H1 (cell line): ENCODE measurements at regions of chr2 and their contacts with region 1.

Region 1: DNA sequence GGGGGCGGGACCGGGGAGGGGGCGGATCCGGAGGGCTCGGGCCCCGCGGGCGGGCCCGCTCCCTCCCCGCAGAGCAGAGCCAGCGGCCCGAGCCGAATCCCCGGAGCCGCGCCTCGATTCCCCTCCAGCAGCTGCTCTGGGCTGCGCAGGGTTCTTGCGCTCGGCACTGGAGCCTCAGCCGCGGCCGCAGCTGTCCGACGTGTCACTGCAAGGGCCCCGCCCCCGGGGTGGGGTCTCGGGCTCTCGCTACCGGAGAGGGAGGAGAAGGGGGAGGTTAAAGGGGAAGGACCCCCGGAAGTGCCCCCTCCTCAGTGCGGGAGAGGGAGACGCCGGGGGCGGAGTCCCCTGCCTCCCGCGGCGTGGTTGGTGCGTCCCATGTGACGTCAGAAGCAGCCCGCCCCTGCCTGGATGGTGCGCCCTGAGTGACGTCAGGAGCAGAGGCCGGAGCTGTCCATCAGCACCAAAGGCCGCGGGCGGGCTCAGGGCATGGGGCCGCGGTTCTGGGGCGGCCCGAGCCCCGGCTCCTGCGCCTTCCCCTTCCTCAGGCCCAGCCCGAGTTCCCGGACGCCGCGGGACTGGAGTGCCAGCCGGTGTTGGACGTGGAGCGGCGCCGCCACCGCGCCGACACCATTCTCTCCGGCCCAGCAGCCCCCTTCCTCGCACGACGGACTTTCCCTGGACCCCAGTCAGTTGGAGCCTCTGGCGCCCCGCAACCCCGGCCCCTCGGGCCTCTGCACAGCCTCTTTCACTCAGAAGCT is at the starts of genes CHPF and TMEM198:
- DNase-seq: peak; percentile 98
- H3K4me3 ChIP-seq: peak within 1 kb of the TSS; percentile 73 to 90 (median 80)
- H3K27ac ChIP-seq: peak within 1 kb of the TSS; percentile 19; the same call in 1 of the 2 replicates
- H3K4me1 ChIP-seq: peaks cover 2 to 13% (median 7%) of the 10 kb centered on the region in 4 experiments; a peak in 6 of 7 replicates
- H3K27me3 ChIP-seq: peaks cover 0 to 4% (median 0%) of the 10 kb centered on the region in 4 experiments; a peak in 2 of 7 replicates
- CTCF ChIP-seq: no peak
- EP300 ChIP-seq: peak in 1 of 2 experiments; percentile 88; a peak in 1 of 3 replicates
- POLR2A ChIP-seq: peak in 1 of 2 experiments; percentile 60; a peak in 2 of 3 replicates
- RAD21 ChIP-seq: no peak; a peak in 1 of 4 replicates
- total RNA-seq, gene CHPF: 62.9 and 68.1 TPM in 2 replicates
- total RNA-seq, gene TMEM198: 10.2 and 11.0 TPM in 2 replicates

Region 2: GRCh38 chr2:219509780-219510511 is 33.8 kb before region 1 on chr2:
- CTCF ChIA-PET with region 1: interaction called, 488 read pairs
- POLR2A ChIA-PET with region 1: no interaction called
- DNase-seq: peak in 1 of 2 experiments; percentile 91
- H3K4me3 ChIP-seq: peak overlapping the region; percentile 27 to 56 (median 50); a peak in 7 of 8 replicates
- H3K27ac ChIP-seq: no peak overlapping the region
- H3K4me1 ChIP-seq: peaks cover 7 to 76% (median 65%) of the 10 kb centered on the region in 4 experiments
- H3K27me3 ChIP-seq: peaks cover 2 to 37% (median 34%) of the 10 kb centered on the region in 4 experiments
- CTCF ChIP-seq: peak in 2 of 3 experiments; percentile 70 to 89; a peak in 3 of 4 replicates
- EP300 ChIP-seq: no peak
- POLR2A ChIP-seq: no peak
- RAD21 ChIP-seq: peak; percentile 38 to 57; a peak in 3 of 4 replicates

Region 3: DNA sequence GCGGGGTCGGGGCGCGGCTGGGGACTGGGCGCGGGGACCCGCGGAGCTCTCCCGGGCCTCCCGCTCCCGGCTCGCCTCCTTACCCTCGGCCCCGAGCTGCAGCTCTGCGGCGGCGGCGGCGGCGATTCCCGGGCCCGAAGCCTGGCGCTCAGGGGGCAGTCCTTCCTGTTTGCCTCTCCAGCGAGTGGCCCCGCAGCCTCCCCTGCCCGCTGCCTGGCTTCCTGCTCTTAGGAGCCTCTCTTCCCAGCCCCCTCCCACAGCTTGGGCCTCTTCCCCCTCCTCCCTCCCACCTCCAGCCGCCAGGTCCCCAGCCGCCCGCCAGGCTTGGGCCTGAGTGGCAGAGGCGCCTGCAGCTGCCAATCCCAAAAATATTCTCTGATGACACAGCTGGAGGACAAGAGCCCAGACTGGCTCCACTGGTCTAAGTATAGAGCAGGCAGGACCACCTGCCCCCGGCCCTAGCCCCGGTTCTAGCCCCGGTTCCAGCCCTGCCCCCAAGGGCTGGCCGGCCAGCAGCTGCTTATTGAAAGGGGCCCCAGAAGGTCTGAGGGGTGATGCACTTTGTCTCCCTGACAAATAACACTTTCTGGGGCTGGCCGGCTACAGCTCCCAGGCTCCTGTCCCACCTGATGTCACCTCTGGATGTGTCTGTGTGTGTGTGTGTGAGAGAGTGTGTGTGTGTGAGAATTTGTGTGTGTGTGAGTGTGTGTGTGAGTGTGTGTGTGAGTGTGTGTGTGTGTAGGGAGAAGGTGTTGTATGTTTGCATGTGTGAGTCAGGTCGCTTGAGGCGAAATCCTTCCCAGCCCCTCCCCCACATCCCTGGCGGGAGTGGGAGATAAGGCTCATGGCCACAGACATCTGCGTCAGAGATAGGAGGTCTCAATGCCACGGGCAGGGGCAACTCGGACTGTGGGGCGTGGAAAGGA is 27.8 kb after region 1 on chr2 and contains the start of gene OBSL1:
- CTCF ChIA-PET with region 1: interaction called, 293 read pairs
- POLR2A ChIA-PET with region 1: interaction called, 10 read pairs
- DNase-seq: peak in 1 of 2 experiments; percentile 88
- H3K4me3 ChIP-seq: peak within 1 kb of the TSS; percentile 45 to 74 (median 58)
- H3K27ac ChIP-seq: peak within 1 kb of the TSS; percentile 42; the same call in 1 of the 2 replicates
- H3K4me1 ChIP-seq: peaks cover 2 to 29% (median 22%) of the 10 kb centered on the region in 4 experiments
- H3K27me3 ChIP-seq: peaks cover 0 to 2% (median 0%) of the 10 kb centered on the region in 4 experiments; a peak in 2 of 7 replicates
- CTCF ChIP-seq: no peak
- EP300 ChIP-seq: no peak
- POLR2A ChIP-seq: no peak; a peak in 1 of 3 replicates
- RAD21 ChIP-seq: no peak
- total RNA-seq, gene OBSL1: 127 and 135 TPM in 2 replicates

Region 4: DNA sequence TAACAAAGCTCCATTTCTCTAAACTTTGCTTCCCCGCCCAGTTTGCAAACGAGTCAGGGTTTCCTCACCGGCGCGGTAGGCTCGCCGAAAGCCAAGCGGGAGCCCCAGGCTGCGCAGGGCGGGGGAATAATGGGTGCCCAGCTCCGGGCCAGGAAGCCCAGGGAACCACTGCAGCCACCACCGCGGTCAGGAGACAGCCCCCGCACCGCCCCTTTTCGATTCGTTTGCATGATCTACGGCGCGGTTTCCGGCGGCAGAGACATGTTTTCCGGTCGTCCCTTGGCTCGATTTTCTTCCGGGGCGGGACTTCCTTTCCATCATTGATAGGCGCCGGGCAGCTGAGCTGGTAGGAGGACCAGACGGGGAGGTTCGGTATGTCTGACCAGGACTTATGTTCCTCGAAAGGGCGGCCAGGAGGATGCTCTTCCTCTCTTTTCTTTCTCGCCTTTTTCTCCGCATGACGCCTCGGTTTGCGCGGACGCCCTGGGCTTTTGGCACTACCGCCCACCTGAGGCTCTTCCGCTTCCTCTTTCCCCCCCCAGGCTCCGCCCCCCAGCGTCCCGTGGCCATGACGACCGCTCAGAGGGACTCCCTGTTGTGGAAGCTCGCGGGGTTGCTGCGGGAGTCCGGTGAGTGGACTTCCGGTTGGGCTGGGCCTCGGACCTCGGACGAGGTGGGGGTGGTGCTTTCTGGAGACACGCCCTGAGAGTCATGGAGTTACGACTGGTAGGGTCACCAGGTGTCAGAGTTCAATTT is 54.0 kb after region 1 on chr2 and contains the start of gene STK11IP:
- CTCF ChIA-PET with region 1: interaction called, 54 read pairs
- POLR2A ChIA-PET with region 1: interaction called, 23 read pairs
- DNase-seq: peak; percentile 93 to 96
- H3K4me3 ChIP-seq: peak within 1 kb of the TSS; percentile 75 to 87 (median 84)
- H3K27ac ChIP-seq: peak within 1 kb of the TSS; percentile 70
- H3K4me1 ChIP-seq: peaks cover 0 to 13% (median 2%) of the 10 kb centered on the region in 4 experiments; a peak in 4 of 7 replicates
- H3K27me3 ChIP-seq: no peaks in the 10 kb centered on the region
- CTCF ChIP-seq: no peak; a peak in 1 of 4 replicates
- EP300 ChIP-seq: no peak
- POLR2A ChIP-seq: peak; percentile 77 to 94
- RAD21 ChIP-seq: 0 out of 4 replicates have a peak, but pooled peaks of 1 of the 2 experiments have one; percentile 4
- total RNA-seq, gene STK11IP: 24.1 and 29.6 TPM in 2 replicates

Region 5: GRCh38 chr2:219612577-219613286 is 69.0 kb after region 1 on chr2:
- CTCF ChIA-PET with region 1: interaction called, 18 read pairs
- POLR2A ChIA-PET with region 1: interaction called, 5 read pairs
- DNase-seq: no peak
- H3K4me3 ChIP-seq: no peak overlapping the region
- H3K27ac ChIP-seq: no peak overlapping the region
- H3K4me1 ChIP-seq: no peaks in the 10 kb centered on the region; a peak in 1 of 7 replicates
- H3K27me3 ChIP-seq: no peaks in the 10 kb centered on the region
- CTCF ChIP-seq: no peak
- EP300 ChIP-seq: no peak
- POLR2A ChIP-seq: no peak
- RAD21 ChIP-seq: no peak

Region 6: GRCh38 chr2:219642465-219643080 is 98.8 kb after region 1 on chr2:
- CTCF ChIA-PET with region 1: interaction called, 48 read pairs
- POLR2A ChIA-PET with region 1: no interaction called
- DNase-seq: peak; percentile 95 to 96
- H3K4me3 ChIP-seq: peak overlapping the region in 1 of 4 experiments; percentile 13; a peak in 1 of 8 replicates
- H3K27ac ChIP-seq: no peak overlapping the region
- H3K4me1 ChIP-seq: peaks cover 0 to 6% (median 2%) of the 10 kb centered on the region in 4 experiments; a peak in 5 of 7 replicates
- H3K27me3 ChIP-seq: peaks cover 0 to 6% (median 3%) of the 10 kb centered on the region in 4 experiments; a peak in 5 of 7 replicates
- CTCF ChIP-seq: peak in 2 of 3 experiments; percentile 100; a peak in 3 of 4 replicates
- EP300 ChIP-seq: peak in 1 of 2 experiments; percentile 23; a peak in 1 of 3 replicates
- POLR2A ChIP-seq: 0 out of 3 replicates have a peak, but pooled peaks of 1 of the 2 experiments have one; percentile 17
- RAD21 ChIP-seq: peak; percentile 95 to 96